ENCODE measurements at regions of chr3 and their contacts with region 1.

Region 1: GRCh38 chr3:52154117-52155094 is at the start of gene POC1A:
- DNase-seq: peak; percentile 61 to 91 (median 83)
- ATAC-seq: peak; percentile 85
- H3K4me3 ChIP-seq: peak within 1 kb of the TSS; percentile 98 to 99
- H3K4me3 Mint-ChIP-seq: peak within 1 kb of the TSS; percentile 96
- H3K27ac ChIP-seq: peak within 1 kb of the TSS; percentile 71 to 91
- H3K27ac Mint-ChIP-seq: peak within 1 kb of the TSS; percentile 96
- H3K4me1 ChIP-seq: peaks cover 7% of the 10 kb centered on the region
- H3K4me1 Mint-ChIP-seq: peaks cover 10% of the 10 kb centered on the region
- H3K27me3 ChIP-seq: no peaks in the 10 kb centered on the region
- H3K27me3 Mint-ChIP-seq: no peaks in the 10 kb centered on the region
- CTCF ChIP-seq: no peak
- total RNA-seq, gene POC1A: 0.24 to 0.42 TPM

Region 2: DNA sequence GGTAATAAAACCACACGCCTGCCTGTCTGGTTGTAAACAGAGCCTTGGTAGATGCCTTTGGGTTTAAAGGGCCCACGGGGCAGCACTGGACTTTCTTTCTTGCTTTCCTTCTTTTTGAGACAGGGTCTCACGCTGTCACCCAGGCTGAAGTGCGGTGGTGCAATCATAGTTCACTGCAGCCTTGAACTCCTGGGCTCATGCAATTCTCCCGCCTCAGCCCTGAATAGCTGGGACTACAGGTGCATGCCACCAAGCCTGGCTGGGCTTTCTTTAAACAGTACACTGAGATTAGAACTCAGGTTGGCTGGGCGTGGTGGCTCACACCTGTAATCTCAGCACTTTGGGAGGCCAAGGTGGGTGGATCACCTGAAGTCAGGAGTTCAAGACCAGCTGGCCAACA is 42.4 kb before region 1 on chr3:
- CTCF ChIA-PET with region 1: no interaction called
- POLR2A ChIA-PET with region 1: no interaction called
- intact Hi-C with region 1: loop called in 1 of 2 experiments (anchors 1 kb)
- DNase-seq: no peak
- ATAC-seq: no peak
- H3K4me3 ChIP-seq: no peak overlapping the region
- H3K4me3 Mint-ChIP-seq: no peak overlapping the region
- H3K27ac ChIP-seq: no peak overlapping the region
- H3K27ac Mint-ChIP-seq: no peak overlapping the region
- H3K4me1 ChIP-seq: no peaks in the 10 kb centered on the region
- H3K4me1 Mint-ChIP-seq: no peaks in the 10 kb centered on the region
- H3K27me3 ChIP-seq: no peaks in the 10 kb centered on the region
- H3K27me3 Mint-ChIP-seq: no peaks in the 10 kb centered on the region
- CTCF ChIP-seq: no peak

Region 3: GRCh38 chr3:52144034-52144795 is 10.2 kb before region 1 on chr3:
- CTCF ChIA-PET with region 1: interaction called, 8 read pairs
- POLR2A ChIA-PET with region 1: interaction called, 3 read pairs
- intact Hi-C with region 1: loop called in 1 of 2 experiments (anchors 1 kb)
- DNase-seq: peak; percentile 74 to 92 (median 90)
- ATAC-seq: peak; percentile 100
- H3K4me3 ChIP-seq: no peak overlapping the region
- H3K4me3 Mint-ChIP-seq: no peak overlapping the region
- H3K27ac ChIP-seq: no peak overlapping the region
- H3K27ac Mint-ChIP-seq: peak overlapping the region; percentile 27
- H3K4me1 ChIP-seq: peaks cover 7% of the 10 kb centered on the region
- H3K4me1 Mint-ChIP-seq: peaks cover 7% of the 10 kb centered on the region
- H3K27me3 ChIP-seq: no peaks in the 10 kb centered on the region
- H3K27me3 Mint-ChIP-seq: no peaks in the 10 kb centered on the region
- CTCF ChIP-seq: peak; percentile 92

Region 4: DNA sequence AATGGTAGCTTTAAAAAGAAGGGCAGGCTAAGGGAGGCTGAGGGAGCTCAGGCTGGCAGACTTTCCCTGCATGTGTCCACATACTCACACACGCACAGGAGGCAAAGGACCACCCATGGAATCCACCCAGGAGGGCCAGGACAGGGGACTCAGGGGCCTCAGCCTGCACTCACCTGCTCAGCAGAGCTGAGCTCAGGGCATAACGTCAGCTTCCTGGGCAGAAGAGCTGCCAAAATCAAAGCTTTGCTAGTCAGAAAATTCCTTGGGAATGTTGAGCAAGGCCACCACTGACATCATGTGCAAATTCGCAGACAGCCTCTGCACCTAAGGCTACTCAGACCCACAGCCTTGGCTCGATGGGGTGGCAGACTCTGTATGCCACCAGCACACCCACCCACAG is 27.1 kb after region 1 on chr3:
- CTCF ChIA-PET with region 1: no interaction called
- POLR2A ChIA-PET with region 1: no interaction called
- intact Hi-C with region 1: no loop called
- DNase-seq: no peak
- ATAC-seq: no peak
- H3K4me3 ChIP-seq: no peak overlapping the region
- H3K4me3 Mint-ChIP-seq: no peak overlapping the region
- H3K27ac ChIP-seq: no peak overlapping the region
- H3K27ac Mint-ChIP-seq: no peak overlapping the region
- H3K4me1 ChIP-seq: no peaks in the 10 kb centered on the region
- H3K4me1 Mint-ChIP-seq: no peaks in the 10 kb centered on the region
- H3K27me3 ChIP-seq: no peaks in the 10 kb centered on the region
- H3K27me3 Mint-ChIP-seq: no peaks in the 10 kb centered on the region
- CTCF ChIP-seq: no peak

Region 5: GRCh38 chr3:52197842-52198668 is 43.6 kb after region 1 on chr3 and contains the start of gene ALAS1:
- CTCF ChIA-PET with region 1: no interaction called
- POLR2A ChIA-PET with region 1: no interaction called
- intact Hi-C with region 1: loop called (anchors 1 to 2 kb)
- DNase-seq: peak; percentile 86 to 98 (median 95)
- ATAC-seq: peak; percentile 98
- H3K4me3 ChIP-seq: peak within 1 kb of the TSS; percentile 88 to 93
- H3K4me3 Mint-ChIP-seq: peak within 1 kb of the TSS; percentile 96
- H3K27ac ChIP-seq: peak within 1 kb of the TSS; percentile 69 to 86
- H3K27ac Mint-ChIP-seq: peak within 1 kb of the TSS; percentile 94
- H3K4me1 ChIP-seq: peaks cover 32% of the 10 kb centered on the region
- H3K4me1 Mint-ChIP-seq: peaks cover 41% of the 10 kb centered on the region
- H3K27me3 ChIP-seq: no peaks in the 10 kb centered on the region
- H3K27me3 Mint-ChIP-seq: no peaks in the 10 kb centered on the region
- CTCF ChIP-seq: no peak
- total RNA-seq, gene ALAS1: 6.0 to 6.6 TPM

Region 6: GRCh38 chr3:52536369-52537164 is 382.2 kb after region 1 on chr3 and contains the start of gene UQCC5:
- CTCF ChIA-PET with region 1: no interaction called
- POLR2A ChIA-PET with region 1: no interaction called
- intact Hi-C with region 1: loop called in 1 of 2 experiments (anchors 2 kb)
- DNase-seq: peak; percentile 92 to 99 (median 95)
- ATAC-seq: peak; percentile 88
- H3K4me3 ChIP-seq: peak within 1 kb of the TSS; percentile 79 to 88
- H3K4me3 Mint-ChIP-seq: peak within 1 kb of the TSS; percentile 99
- H3K27ac ChIP-seq: peak within 1 kb of the TSS; percentile 82 to 83
- H3K27ac Mint-ChIP-seq: peak within 1 kb of the TSS; percentile 98
- H3K4me1 ChIP-seq: peaks cover 41% of the 10 kb centered on the region
- H3K4me1 Mint-ChIP-seq: peaks cover 55% of the 10 kb centered on the region
- H3K27me3 ChIP-seq: peaks cover 0 to 8% of the 10 kb centered on the region in 2 experiments
- H3K27me3 Mint-ChIP-seq: no peaks in the 10 kb centered on the region
- CTCF ChIP-seq: no peak
- total RNA-seq, gene UQCC5: 5.2 to 6.8 TPM